ENCODE measurements at regions of chr1 and their contacts with region 1.

Region 1: DNA sequence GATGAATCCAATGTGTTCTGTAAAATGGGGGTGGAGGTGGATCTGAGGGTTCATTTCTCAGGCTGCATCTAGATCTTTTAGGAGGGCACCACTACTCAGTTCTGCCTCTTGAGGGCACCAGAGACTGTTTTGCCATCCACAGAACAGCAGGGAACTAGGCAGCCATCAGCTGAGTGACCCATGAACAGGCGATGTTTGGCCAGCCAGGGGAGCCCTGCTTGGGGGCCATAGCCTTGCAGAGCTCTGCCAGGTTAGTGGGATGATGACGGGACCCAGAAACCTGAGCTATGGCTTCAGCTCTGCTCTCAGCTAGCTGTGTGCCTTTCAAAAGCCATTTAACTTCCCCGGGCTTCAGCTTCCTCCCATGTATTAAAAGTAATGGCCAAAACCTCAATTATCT is 13.4 kb upstream of the NOS1AP start:
- DNase-seq: peak; percentile 23
- H3K4me3 ChIP-seq: no peak overlapping the region
- H3K27ac ChIP-seq: no peak overlapping the region
- H3K27me3 ChIP-seq: peaks cover 15% of the 10 kb centered on the region
- CTCF ChIP-seq: peak; percentile 98

Region 2: DNA sequence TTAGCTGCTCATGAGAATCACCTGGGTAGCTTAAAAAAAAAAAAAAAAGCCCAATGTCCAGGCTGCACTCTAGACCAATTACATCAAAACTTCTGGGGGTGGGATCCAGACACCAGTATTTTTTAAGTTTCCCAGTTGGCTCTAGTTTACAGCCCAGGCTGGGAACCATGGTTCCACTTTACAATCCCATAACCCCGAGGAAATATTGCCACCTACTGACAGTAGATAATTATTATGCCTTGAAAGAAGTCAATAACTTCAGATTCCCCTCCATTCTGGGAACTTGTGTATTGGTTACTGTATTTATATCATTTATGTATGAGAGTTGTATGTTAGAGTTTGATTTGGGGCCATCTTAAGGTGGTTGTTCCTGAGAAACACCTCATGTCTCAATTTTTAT is 220.4 kb after region 1 on chr1:
- CTCF ChIA-PET with region 1: interaction called, 82 read pairs
- POLR2A ChIA-PET with region 1: no interaction called
- DNase-seq: no peak
- H3K4me3 ChIP-seq: no peak overlapping the region
- H3K27ac ChIP-seq: no peak overlapping the region
- H3K27me3 ChIP-seq: peaks cover 12% of the 10 kb centered on the region
- CTCF ChIP-seq: peak; percentile 46